ENCODE measurements at regions of chr7 and their contacts with region 1.

Region 1: DNA sequence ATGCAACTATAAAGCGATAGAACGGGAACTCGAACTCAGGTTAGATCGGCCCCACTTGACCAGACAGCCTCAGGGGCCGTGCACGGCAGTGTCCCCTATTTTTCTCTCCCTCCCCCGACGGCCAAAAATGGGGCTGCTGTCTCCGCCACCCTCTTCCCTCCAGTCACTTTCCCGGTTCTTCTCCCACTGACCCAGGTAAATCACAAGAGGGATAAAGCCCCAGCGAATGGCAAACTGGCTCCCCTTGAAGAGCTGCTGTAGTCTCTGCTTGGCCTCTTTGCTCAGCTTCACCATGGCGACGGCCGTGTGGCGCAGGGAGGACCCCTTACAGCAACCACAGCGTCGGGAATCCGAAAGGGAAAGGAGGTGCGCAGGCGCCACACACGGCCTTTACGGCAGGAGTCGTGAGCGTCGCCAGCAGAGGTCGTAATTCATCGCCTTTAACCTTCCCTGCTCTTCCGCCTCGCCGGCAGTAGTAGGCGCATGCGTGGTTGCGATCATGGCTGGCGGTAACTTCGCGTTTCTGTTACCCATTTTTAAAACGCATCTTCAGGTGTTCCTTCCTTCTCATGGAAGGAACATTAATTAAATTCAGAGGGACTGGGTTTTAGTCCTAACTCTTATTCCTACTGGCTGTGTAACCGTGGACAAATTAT is at the start of gene TOMM7:
- DNase-seq: peak; percentile 95
- ATAC-seq: peak; percentile 89
- H3K4me3 ChIP-seq: peak within 1 kb of the TSS; percentile 61 to 90
- H3K27ac ChIP-seq: peak within 1 kb of the TSS; percentile 79
- H3K4me1 ChIP-seq: peaks cover 0 to 20% of the 10 kb centered on the region in 2 experiments; a peak in 3 of 4 replicates
- H3K27me3 ChIP-seq: no peaks in the 10 kb centered on the region
- CTCF ChIP-seq: no peak
- POLR2A ChIP-seq: peak; percentile 71
- RAD21 ChIP-seq: no peak
- total RNA-seq, gene TOMM7: 325 TPM

Region 2: DNA sequence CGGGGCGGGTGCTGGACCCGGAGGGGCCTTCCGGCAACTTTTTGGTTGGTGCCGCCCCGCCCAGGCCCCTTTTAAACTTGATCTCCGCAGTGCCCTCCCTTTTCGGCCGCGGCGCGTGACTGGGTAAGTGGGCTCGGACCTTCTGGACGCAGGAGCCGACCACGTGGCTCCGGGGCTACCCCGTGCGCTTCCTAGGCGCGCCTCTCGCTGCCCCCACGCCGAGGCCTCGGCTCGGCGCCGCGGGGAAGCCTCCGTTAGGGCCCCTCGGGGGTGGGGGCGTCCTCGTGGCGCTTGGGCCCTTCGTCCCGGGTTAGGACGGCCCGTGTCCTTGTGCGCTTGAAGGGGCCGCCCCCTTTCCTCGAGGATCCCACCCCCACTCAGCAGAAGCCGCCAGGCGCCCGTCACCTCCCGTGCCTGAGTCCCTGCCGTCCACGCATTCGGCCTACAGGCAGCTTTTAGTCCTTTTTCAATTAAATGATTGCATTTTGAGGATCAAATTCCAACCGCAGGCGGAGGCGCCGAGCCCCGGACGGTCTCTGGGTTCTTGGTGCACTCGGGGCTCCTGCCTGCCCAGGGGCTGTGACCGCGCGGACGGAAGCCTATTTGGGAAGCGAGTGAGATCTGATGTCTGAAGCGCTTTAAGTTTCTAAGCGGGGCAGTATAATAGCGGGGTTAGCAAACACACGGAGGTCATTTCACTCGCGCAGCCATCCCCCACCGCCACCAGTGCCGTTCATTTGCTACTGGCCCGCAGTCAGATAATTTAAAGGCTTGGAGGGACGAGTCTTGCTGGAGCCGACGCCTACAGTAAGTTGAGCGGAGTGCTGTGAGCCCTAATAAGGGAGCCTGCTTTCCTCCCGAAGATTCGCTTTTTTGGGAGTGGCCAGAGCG is 31.8 kb after region 1 on chr7:
- CTCF ChIA-PET with region 1: no interaction called
- POLR2A ChIA-PET with region 1: interaction called, 8 read pairs
- RAD21 ChIA-PET with region 1: no interaction called
- intact Hi-C with region 1: loop called (anchors 1 kb)
- DNase-seq: peak; percentile 80
- ATAC-seq: peak; percentile 76
- H3K4me3 ChIP-seq: peak overlapping the region; percentile 62 to 89
- H3K27ac ChIP-seq: peak overlapping the region; percentile 97
- H3K4me1 ChIP-seq: peaks cover 37 to 55% of the 10 kb centered on the region in 2 experiments
- H3K27me3 ChIP-seq: no peaks in the 10 kb centered on the region
- CTCF ChIP-seq: no peak; a peak in 1 of 6 replicates
- POLR2A ChIP-seq: peak; percentile 20
- RAD21 ChIP-seq: no peak

Region 3: DNA sequence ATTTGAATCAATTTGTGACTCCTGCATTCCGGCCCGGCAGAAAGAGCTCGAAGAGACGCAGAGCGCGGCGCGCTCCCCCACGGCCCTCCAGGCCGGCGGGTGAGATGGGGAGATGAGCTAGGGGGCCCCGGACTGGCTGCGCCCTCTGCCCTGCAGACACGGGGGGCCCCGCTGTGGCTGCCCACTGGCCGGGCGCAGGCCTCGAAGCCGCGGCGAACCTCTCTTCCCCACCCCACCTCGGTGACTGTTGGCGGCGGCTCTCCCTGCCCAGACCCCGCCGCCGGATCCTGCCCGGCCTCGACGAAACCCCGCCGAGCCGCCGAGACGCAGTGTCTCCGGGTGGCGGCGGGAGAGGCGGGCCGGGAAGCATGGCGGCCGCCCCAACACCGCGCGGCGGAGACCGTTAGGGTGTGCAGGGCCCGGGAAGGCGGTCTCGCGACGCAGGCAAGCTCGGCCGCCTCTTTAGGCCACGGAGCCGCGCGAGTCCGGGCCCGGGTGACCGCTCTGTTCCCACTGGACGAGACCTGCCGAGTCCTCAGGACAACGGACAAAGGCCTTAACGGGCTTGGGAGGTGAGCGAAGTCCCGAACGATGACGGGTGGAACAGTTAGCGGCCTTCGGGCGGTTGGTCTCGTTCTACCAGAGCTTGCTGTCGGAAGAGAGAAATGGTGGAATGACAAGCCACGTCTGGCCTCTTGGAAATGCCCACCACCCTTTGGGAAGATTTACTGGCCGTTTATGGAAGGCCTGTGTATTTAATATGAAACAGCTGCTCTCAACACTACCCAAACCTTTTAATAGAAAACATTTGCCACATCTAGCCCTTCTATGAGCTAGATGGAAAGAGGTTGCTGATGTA is 383.5 kb after region 1 on chr7:
- CTCF ChIA-PET with region 1: no interaction called
- POLR2A ChIA-PET with region 1: no interaction called
- RAD21 ChIA-PET with region 1: no interaction called
- intact Hi-C with region 1: no loop called
- DNase-seq: no peak
- ATAC-seq: no peak
- H3K4me3 ChIP-seq: no peak overlapping the region
- H3K27ac ChIP-seq: no peak overlapping the region
- H3K4me1 ChIP-seq: no peaks in the 10 kb centered on the region
- H3K27me3 ChIP-seq: no peaks in the 10 kb centered on the region
- CTCF ChIP-seq: no peak
- POLR2A ChIP-seq: no peak
- RAD21 ChIP-seq: no peak